HCT116 (cell line): ENCODE measurements at regions of chr9 and their contacts with region 1.

Region 1: GRCh38 chr9:100011062-100011681 is 87.6 kb downstream of the ERP44 start:
- DNase-seq: peak; percentile 59
- ATAC-seq: peak; percentile 54
- H3K4me3 ChIP-seq: no peak overlapping the region
- H3K27ac ChIP-seq: no peak overlapping the region
- H3K4me1 ChIP-seq: no peaks in the 10 kb centered on the region
- H3K27me3 ChIP-seq: no peaks in the 10 kb centered on the region
- CTCF ChIP-seq: peak; percentile 54 to 75 (median 58); a peak in 5 of 6 replicates
- POLR2A ChIP-seq: no peak
- RAD21 ChIP-seq: peak; percentile 79

Region 2: GRCh38 chr9:99184475-99185347 is 826.5 kb before region 1 on chr9:
- CTCF ChIA-PET with region 1: no interaction called
- POLR2A ChIA-PET with region 1: no interaction called
- RAD21 ChIA-PET with region 1: no interaction called
- intact Hi-C with region 1: loop called (anchors 10 kb)
- DNase-seq: peak; percentile 74
- ATAC-seq: peak; percentile 94
- H3K4me3 ChIP-seq: no peak overlapping the region
- H3K27ac ChIP-seq: no peak overlapping the region
- H3K4me1 ChIP-seq: peaks cover 0 to 4% of the 10 kb centered on the region in 2 experiments; a peak in 1 of 4 replicates
- H3K27me3 ChIP-seq: peaks cover 6% of the 10 kb centered on the region; the same call in 1 of the 2 replicates
- CTCF ChIP-seq: peak; percentile 66 to 94 (median 91)
- POLR2A ChIP-seq: no peak
- RAD21 ChIP-seq: peak; percentile 88

Region 3: DNA sequence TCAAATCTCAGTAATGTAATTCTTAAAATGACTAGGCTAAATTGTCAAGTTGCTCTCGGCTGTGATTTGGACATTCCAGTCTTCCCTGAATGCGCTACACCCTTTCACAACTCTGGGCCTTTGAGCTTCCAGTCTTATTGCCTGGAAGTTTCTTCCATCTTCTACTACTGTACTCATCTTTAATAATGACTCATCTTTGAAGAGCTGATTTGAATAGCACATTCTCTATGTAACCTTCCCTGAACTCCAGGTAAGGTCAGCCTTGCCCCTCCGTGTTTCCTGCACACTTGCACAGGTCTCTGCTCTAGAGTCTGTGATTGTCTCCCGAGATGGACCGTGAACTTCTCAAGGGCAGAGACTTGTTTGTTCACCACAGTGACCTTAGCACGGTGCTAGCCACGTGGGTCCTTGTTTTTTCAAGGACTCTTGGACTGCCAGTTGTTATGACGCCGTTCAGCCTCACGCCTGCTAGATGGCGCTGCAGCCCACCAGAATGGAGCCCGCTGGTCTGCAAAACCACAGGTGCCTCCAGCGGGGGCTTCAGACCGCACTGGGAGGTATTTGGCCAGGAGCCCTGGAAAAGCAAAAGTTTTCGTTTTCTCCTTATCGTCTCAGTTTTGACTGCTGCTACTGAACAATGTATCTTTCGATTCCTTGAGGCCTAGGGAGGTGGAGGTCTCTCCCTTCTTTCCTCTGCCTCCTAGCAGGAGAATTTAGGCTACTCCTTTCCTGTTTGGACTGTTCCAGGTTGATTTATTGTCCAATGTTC is 744.7 kb before region 1 on chr9:
- CTCF ChIA-PET with region 1: interaction called, 4 read pairs
- POLR2A ChIA-PET with region 1: no interaction called
- RAD21 ChIA-PET with region 1: no interaction called
- intact Hi-C with region 1: loop called (anchors 1 kb)
- DNase-seq: peak; percentile 69
- ATAC-seq: peak; percentile 95
- H3K4me3 ChIP-seq: peak overlapping the region in 1 of 2 experiments; percentile 7; a peak in 1 of 4 replicates
- H3K27ac ChIP-seq: no peak overlapping the region
- H3K4me1 ChIP-seq: peaks cover 0 to 15% of the 10 kb centered on the region in 2 experiments; a peak in 2 of 4 replicates
- H3K27me3 ChIP-seq: no peaks in the 10 kb centered on the region
- CTCF ChIP-seq: peak; percentile 76 to 97 (median 89)
- POLR2A ChIP-seq: no peak
- RAD21 ChIP-seq: peak; percentile 93

Region 4: DNA sequence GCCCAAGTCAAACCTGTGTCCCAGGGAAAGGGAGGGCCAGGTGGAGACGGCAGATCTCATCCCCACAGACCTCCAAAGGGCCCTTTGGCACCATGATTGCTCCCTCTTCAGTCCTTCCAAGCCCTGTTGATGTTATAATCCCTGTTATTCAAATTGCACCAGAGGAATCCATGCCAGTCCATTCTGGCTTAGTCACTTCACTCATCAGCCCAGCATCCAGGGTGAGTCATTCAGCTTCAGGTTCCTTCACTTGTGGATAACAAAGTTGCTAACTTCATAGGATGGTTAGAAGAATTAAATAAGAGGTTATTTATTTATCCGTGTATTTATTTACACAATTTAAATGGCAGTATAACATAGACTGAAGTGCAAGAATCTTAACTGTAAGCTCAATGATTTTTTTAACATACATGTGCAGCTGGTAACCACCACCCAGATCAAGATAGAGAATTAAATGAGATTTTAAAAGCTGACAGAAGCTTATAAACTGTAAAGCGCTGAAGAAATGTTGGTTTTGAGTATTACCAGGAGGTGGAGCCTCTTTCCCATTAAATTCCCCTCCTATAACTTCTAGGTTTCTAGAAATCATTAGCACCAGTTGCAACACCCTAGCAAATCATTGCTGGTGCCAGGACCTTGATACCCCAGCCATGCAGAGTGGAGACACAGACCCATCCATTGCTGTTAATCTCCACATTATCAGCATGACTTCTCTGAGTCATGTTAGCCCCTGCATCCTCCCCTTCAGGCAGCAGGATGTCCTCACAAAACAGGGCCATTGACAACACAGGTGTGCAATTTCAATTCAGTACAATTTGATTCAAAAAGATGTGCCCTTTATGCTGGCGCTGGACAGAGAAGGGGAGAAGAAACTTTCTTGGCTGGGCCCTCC is 711.7 kb before region 1 on chr9:
- CTCF ChIA-PET with region 1: interaction called, 10 read pairs
- POLR2A ChIA-PET with region 1: no interaction called
- RAD21 ChIA-PET with region 1: interaction called in 1 of 2 experiments, 3 read pairs
- intact Hi-C with region 1: loop called (anchors 1 kb)
- DNase-seq: no peak
- ATAC-seq: peak; percentile 63
- H3K4me3 ChIP-seq: no peak overlapping the region
- H3K27ac ChIP-seq: no peak overlapping the region
- H3K4me1 ChIP-seq: peaks cover 0 to 4% of the 10 kb centered on the region in 2 experiments; a peak in 1 of 4 replicates
- H3K27me3 ChIP-seq: no peaks in the 10 kb centered on the region
- CTCF ChIP-seq: peak; percentile 9 to 46 (median 44); a peak in 3 of 6 replicates
- POLR2A ChIP-seq: no peak
- RAD21 ChIP-seq: peak; percentile 75